ENCODE measurements at regions of chr18 and their contacts with region 1.

Region 1: GRCh38 chr18:46660955-46661749 is 4.1 kb upstream of the LOXHD1 start:
- DNase-seq: no peak
- H3K4me3 Mint-ChIP-seq: no peak overlapping the region
- H3K27ac Mint-ChIP-seq: no peak overlapping the region
- H3K4me1 Mint-ChIP-seq: no peaks in the 10 kb centered on the region
- H3K27me3 Mint-ChIP-seq: no peaks in the 10 kb centered on the region

Region 2: GRCh38 chr18:46155641-46156051 is 505.5 kb before region 1 on chr18:
- CTCF ChIA-PET with region 1: interaction called, 15 read pairs
- intact Hi-C with region 1: no loop called
- DNase-seq: peak; percentile 66
- H3K4me3 Mint-ChIP-seq: no peak overlapping the region
- H3K27ac Mint-ChIP-seq: peak overlapping the region; percentile 89
- H3K4me1 Mint-ChIP-seq: peaks cover 63% of the 10 kb centered on the region
- H3K27me3 Mint-ChIP-seq: no peaks in the 10 kb centered on the region

Region 3: GRCh38 chr18:46343931-46344372 is 317.2 kb before region 1 on chr18:
- CTCF ChIA-PET with region 1: interaction called, 6 read pairs
- intact Hi-C with region 1: loop called (anchors 1 kb)
- DNase-seq: peak; percentile 85
- H3K4me3 Mint-ChIP-seq: no peak overlapping the region
- H3K27ac Mint-ChIP-seq: peak overlapping the region; percentile 57
- H3K4me1 Mint-ChIP-seq: peaks cover 23% of the 10 kb centered on the region
- H3K27me3 Mint-ChIP-seq: peaks cover 3% of the 10 kb centered on the region

Region 4: DNA sequence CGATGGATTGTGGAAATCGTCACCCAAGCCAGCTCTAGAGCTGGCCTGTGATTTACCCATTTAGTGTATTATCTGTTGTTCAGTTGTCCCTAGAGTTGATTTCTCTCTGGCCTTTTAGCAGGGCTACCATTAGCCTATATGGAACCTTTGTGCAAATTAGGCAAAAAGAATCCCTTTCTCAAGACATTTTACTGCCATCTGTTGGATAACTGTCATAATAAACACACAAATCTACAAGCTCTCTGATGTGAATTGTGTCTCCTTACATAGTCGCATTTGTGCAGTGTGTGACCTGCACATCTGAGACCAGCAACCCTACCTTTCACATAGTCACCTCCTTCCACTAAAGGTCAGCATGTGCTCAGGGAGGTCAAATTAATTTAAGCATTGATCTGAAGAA is 38.2 kb before region 1 on chr18:
- CTCF ChIA-PET with region 1: interaction called, 25 read pairs
- intact Hi-C with region 1: no loop called
- DNase-seq: no peak
- H3K4me3 Mint-ChIP-seq: no peak overlapping the region
- H3K27ac Mint-ChIP-seq: peak overlapping the region; percentile 71
- H3K4me1 Mint-ChIP-seq: peaks cover 27% of the 10 kb centered on the region
- H3K27me3 Mint-ChIP-seq: no peaks in the 10 kb centered on the region

Region 5: GRCh38 chr18:46672062-46672970 is 11.2 kb after region 1 on chr18:
- CTCF ChIA-PET with region 1: interaction called, 17 read pairs
- intact Hi-C with region 1: no loop called
- DNase-seq: peak; percentile 26
- H3K4me3 Mint-ChIP-seq: no peak overlapping the region
- H3K27ac Mint-ChIP-seq: no peak overlapping the region
- H3K4me1 Mint-ChIP-seq: peaks cover 11% of the 10 kb centered on the region
- H3K27me3 Mint-ChIP-seq: no peaks in the 10 kb centered on the region